Endothelial cell of umbilical vein (primary cell): ENCODE measurements at regions of chr15 and their contacts with region 1.

Region 1: GRCh38 chr15:43230640-43231115 is 9.9 kb upstream of the EPB42 start:
- DNase-seq: no peak
- H3K4me3 ChIP-seq: no peak overlapping the region
- H3K27ac ChIP-seq: no peak overlapping the region
- H3K4me1 ChIP-seq: no peaks in the 10 kb centered on the region
- H3K27me3 ChIP-seq: peaks cover 0 to 12% of the 10 kb centered on the region in 2 experiments
- CTCF ChIP-seq: no peak
- POLR2A ChIP-seq: no peak

Region 2: GRCh38 chr15:42640103-42640502 is 590.6 kb before region 1 on chr15:
- CTCF ChIA-PET with region 1: no interaction called
- POLR2A ChIA-PET with region 1: no interaction called
- dilution Hi-C with region 1: no loop called
- intact Hi-C with region 1: no loop called
- DNase-seq: no peak
- H3K4me3 ChIP-seq: no peak overlapping the region
- H3K27ac ChIP-seq: no peak overlapping the region
- H3K4me1 ChIP-seq: no peaks in the 10 kb centered on the region
- H3K27me3 ChIP-seq: no peaks in the 10 kb centered on the region
- CTCF ChIP-seq: no peak
- POLR2A ChIP-seq: no peak

Region 3: DNA sequence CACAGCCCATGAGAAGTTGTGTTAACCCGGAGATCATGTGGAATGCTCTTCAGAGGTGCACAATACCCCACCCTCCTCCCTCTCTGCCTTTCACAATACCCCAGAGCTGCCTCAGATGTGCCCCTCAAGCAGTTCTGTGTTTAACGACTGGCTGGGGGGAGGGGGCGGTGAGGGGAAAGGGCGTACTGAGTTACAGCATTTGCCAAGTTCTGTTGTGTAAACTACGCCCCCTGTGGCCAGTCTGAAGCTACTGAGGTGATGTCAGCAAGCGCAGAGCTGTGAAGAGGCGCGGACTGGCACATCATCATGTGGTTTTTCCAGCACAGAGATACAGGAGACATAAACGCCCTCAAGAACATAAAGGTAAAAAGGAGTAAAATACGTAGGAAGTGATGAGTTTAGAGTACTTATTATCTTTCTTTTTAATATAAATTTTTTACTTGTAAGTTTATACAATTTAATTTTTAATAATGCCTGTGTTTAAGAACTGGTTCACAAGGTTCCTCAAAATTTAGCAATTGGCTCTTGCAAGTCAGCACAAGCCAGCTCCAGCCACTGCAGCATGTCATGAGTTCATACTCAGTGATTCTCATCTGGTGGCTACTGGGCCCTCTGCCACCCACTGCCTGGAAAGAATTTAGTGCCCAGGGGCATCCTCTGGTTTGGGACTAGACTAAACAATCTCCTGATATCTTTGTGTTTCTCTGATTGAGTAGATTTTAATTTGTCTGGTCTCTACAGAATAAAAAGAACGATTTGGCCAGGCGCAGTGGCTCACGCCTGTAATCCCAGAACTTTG is 11.6 kb before region 1 on chr15:
- CTCF ChIA-PET with region 1: interaction called, 27 read pairs
- POLR2A ChIA-PET with region 1: no interaction called
- dilution Hi-C with region 1: no loop called
- intact Hi-C with region 1: no loop called
- DNase-seq: peak; percentile 6
- H3K4me3 ChIP-seq: no peak overlapping the region
- H3K27ac ChIP-seq: no peak overlapping the region
- H3K4me1 ChIP-seq: no peaks in the 10 kb centered on the region
- H3K27me3 ChIP-seq: peaks cover 5 to 26% of the 10 kb centered on the region in 2 experiments
- CTCF ChIP-seq: peak; percentile 19 to 27
- POLR2A ChIP-seq: no peak

Region 4: DNA sequence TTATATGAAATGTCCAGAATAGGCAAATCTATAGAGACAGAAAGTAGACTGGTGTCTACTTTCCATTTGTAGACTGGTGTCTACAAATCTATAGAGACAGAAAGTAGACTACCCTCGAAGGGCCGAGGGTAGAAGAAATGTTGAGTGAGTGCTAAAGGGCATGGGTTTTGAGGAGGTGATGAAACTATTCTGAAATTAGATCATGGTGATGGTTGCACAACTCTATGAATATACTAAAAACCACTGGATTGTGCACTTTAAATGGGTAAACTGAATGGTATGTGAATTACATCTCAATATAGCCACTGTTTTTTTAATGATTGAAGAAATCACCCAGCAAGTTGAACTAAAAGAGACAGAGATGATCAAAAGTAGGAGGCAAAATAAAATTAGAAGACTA is 234.4 kb after region 1 on chr15:
- CTCF ChIA-PET with region 1: no interaction called
- POLR2A ChIA-PET with region 1: no interaction called
- dilution Hi-C with region 1: no loop called
- intact Hi-C with region 1: no loop called
- DNase-seq: no peak
- H3K4me3 ChIP-seq: no peak overlapping the region
- H3K27ac ChIP-seq: no peak overlapping the region
- H3K4me1 ChIP-seq: no peaks in the 10 kb centered on the region
- H3K27me3 ChIP-seq: no peaks in the 10 kb centered on the region
- CTCF ChIP-seq: no peak
- POLR2A ChIP-seq: no peak